ENCODE measurements at regions of chr18 and their contacts with region 1.

Region 1: DNA sequence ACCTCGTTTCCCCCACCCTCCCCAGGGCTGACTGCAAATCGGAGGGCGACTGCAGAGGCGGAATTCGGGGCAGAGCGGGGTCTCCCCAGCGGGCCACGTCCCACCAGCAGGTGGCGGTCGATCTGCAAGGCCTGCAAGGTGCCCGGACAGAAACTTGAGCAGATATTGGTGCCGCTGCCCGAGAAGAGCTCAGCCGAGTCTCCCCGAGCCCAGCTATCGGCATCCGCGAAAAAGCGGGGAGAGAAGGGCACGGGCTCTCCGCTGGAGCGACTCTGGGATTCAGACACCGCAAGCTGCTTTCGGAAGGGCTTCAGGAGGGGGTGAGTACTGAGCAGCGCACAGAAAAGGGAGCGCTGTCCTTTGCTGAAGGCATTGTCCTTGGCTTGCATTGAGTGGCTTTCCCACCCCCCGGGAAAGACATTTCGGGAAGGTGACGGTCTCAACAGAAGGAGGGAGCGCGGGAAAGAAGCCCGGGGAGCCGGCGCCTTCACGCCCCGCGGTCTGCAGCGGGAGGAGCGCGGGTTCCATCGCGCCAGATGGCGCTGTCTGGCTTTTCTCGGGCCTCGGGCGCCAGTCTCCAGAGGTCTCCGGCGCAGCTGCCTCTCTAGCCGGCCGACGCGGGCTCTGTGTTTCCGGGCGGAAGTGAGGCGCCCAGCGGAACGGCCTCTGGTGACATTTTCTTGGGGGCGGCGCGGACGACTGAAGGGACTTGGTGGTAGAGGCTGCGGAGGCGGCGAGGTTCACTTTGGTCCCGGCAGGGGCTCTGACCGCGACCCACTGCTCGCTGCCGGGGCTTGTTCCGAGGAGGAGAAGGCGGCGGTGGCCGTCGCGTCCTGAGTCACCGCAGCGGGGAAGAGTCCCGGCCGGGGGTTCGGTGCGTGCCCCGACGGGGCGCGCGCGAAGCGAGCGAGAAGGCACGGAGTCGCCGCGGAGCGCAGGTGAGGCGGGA is 69.5 kb downstream of the HAUS1 start:
- DNase-seq: peak; percentile 90
- H3K4me3 ChIP-seq: peak overlapping the region; percentile 76 to 89 (median 84)
- H3K27ac ChIP-seq: peak overlapping the region; percentile 78
- H3K4me1 ChIP-seq: peaks cover 15% of the 10 kb centered on the region
- H3K27me3 ChIP-seq: no peaks in the 10 kb centered on the region
- CTCF ChIP-seq: peak; percentile 84 to 97
- POLR2A ChIP-seq: peak; percentile 75

Region 2: GRCh38 chr18:46148810-46149209 is 24.9 kb before region 1 on chr18:
- CTCF ChIA-PET with region 1: interaction called, 38 read pairs
- POLR2A ChIA-PET with region 1: no interaction called
- dilution Hi-C with region 1: no loop called
- intact Hi-C with region 1: loop called (anchors 2 kb)
- DNase-seq: peak; percentile 66
- H3K4me3 ChIP-seq: no peak overlapping the region
- H3K27ac ChIP-seq: no peak overlapping the region
- H3K4me1 ChIP-seq: no peaks in the 10 kb centered on the region
- H3K27me3 ChIP-seq: no peaks in the 10 kb centered on the region
- CTCF ChIP-seq: peak; percentile 52 to 59
- POLR2A ChIP-seq: no peak

Region 3: DNA sequence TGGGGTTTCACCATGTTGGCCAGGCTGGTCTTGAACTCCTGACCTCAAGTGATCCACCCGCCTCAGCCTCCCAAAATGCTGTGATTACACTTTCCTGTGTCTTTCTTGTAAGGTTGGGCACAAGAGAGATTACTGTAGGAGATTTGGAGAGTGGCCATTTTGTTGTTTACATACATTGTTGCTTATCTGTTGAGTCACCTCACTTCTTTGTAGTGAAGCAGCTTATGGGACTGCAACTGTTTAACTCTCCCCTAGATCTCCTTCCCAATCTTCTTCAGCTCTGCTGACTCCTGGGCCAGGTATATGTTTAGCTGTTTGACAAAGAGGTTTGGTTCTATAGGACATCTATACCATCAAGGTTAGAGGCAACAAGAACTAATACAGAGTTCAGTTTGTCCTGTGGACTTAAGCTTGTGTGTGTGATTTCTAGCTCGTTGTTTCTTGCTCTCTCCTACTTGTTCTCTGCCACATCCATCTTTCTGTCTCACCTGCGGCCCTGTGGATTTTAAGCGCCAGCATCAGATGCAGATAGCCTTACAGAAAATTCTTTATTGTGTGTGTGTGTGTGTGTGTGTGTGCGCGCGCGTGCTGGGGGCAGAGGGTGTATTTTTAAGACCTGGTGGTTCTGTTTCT is 26.0 kb after region 1 on chr18:
- CTCF ChIA-PET with region 1: interaction called, 49 read pairs
- POLR2A ChIA-PET with region 1: interaction called, 6 read pairs
- dilution Hi-C with region 1: no loop called
- intact Hi-C with region 1: no loop called
- DNase-seq: peak; percentile 47
- H3K4me3 ChIP-seq: no peak overlapping the region
- H3K27ac ChIP-seq: peak overlapping the region; percentile 16
- H3K4me1 ChIP-seq: peaks cover 5% of the 10 kb centered on the region
- H3K27me3 ChIP-seq: no peaks in the 10 kb centered on the region
- CTCF ChIP-seq: no peak
- POLR2A ChIP-seq: no peak

Region 4: GRCh38 chr18:46220116-46220515 is 46.4 kb after region 1 on chr18:
- CTCF ChIA-PET with region 1: interaction called, 21 read pairs
- POLR2A ChIA-PET with region 1: no interaction called
- dilution Hi-C with region 1: no loop called
- intact Hi-C with region 1: no loop called
- DNase-seq: no peak
- H3K4me3 ChIP-seq: no peak overlapping the region
- H3K27ac ChIP-seq: no peak overlapping the region
- H3K4me1 ChIP-seq: peaks cover 14% of the 10 kb centered on the region
- H3K27me3 ChIP-seq: no peaks in the 10 kb centered on the region
- CTCF ChIP-seq: no peak
- POLR2A ChIP-seq: no peak

Region 5: DNA sequence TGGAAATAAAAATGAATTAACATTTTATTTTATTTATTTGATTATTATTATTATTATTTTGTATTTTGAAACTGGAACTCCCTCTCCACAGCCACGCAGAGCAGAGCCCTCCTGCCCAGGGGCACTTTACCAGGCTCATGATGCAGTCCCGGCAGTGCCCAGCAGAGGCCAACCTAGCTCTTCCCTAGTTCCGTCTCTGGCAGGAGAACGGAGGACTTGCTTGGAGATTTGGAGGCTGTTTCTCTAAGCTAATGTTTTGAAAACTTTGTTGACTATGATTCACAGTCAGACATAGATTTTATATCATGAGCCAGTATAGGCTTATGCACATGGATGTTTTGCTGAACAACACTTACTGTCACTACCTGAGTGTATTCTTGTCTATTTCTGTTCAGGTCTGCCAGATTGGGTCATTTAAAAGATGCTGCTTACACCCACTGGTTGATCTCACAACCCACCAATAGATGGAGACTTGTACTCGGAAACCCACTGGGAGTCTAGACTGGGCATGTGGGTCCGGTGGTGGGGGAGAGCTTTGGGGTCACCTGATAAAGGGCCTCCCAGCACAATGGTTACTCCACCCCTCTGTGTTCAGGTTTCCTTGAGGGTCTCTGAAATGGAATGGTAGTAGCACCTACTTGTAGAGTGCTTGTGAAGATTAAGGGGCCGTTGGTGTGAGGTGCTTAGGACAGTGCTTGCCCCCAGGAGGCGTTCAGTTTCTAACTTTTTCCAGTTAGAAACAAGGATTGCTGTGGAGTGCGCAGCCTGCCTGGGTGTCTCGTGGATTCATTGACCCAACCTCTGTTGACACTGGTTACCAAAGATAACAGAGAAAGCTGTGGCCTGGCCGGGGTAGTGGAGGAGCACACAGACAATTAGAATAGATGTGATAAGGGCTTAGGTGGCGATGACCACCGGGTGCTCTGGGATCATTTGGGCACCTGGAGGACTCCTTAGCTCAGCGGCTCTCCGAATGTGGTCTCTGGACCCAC is 107.8 kb after region 1 on chr18:
- CTCF ChIA-PET with region 1: interaction called, 36 read pairs
- POLR2A ChIA-PET with region 1: no interaction called
- dilution Hi-C with region 1: no loop called
- intact Hi-C with region 1: loop called (anchors 1 kb)
- DNase-seq: peak; percentile 61
- H3K4me3 ChIP-seq: no peak overlapping the region
- H3K27ac ChIP-seq: no peak overlapping the region
- H3K4me1 ChIP-seq: peaks cover 3% of the 10 kb centered on the region
- H3K27me3 ChIP-seq: no peaks in the 10 kb centered on the region
- CTCF ChIP-seq: peak; percentile 80 to 85
- POLR2A ChIP-seq: no peak

Region 6: GRCh38 chr18:46374863-46375262 is 201.2 kb after region 1 on chr18:
- CTCF ChIA-PET with region 1: no interaction called
- POLR2A ChIA-PET with region 1: no interaction called
- dilution Hi-C with region 1: no loop called
- intact Hi-C with region 1: no loop called
- DNase-seq: no peak
- H3K4me3 ChIP-seq: no peak overlapping the region
- H3K27ac ChIP-seq: no peak overlapping the region
- H3K4me1 ChIP-seq: no peaks in the 10 kb centered on the region
- H3K27me3 ChIP-seq: no peaks in the 10 kb centered on the region
- CTCF ChIP-seq: no peak
- POLR2A ChIP-seq: no peak

Region 7: DNA sequence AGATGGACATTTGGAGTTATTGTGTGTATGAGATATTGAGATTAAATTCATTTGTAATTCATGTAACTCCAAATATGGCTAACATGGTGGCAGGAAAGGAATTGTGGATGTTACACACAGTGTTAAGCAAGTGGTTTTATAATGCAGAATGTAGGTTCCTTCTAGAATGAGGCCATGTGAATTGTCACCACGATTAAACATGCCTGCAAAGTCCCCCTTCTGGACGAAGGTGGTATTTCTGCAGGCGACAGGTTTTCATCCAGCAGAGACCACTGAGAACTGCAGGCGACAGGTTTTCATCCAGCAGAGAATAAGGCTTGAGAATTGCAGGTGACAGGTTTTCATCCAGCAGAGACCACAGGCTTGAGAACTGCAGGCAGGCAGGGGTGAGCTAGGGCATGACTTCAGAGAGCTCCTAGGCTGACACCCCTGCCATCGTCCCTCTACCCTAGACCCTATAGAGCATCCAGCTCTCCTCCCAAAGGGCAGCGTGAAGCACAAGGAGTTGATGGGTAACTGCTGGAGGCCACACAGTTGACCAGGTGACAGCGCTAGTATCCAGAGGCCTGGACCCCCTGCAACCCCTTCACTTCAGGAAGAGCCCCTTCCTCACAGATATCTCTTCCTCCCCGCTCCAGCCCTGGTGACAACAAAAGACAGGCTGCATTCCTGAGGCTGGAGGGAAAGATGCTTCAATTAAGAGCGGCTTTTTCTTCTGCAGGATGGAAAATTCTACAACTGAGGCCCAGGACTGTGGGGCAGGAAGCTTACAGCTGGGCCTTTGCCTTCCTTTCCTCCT is 307.6 kb after region 1 on chr18:
- CTCF ChIA-PET with region 1: interaction called, 16 read pairs
- POLR2A ChIA-PET with region 1: no interaction called
- dilution Hi-C with region 1: no loop called
- intact Hi-C with region 1: loop called (anchors 1 kb)
- DNase-seq: peak; percentile 37
- H3K4me3 ChIP-seq: no peak overlapping the region
- H3K27ac ChIP-seq: no peak overlapping the region
- H3K4me1 ChIP-seq: no peaks in the 10 kb centered on the region
- H3K27me3 ChIP-seq: no peaks in the 10 kb centered on the region
- CTCF ChIP-seq: peak; percentile 57 to 61
- POLR2A ChIP-seq: no peak

Region 8: GRCh38 chr18:46728219-46728930 is 554.7 kb after region 1 on chr18:
- CTCF ChIA-PET with region 1: no interaction called
- POLR2A ChIA-PET with region 1: no interaction called
- dilution Hi-C with region 1: no loop called
- intact Hi-C with region 1: no loop called
- DNase-seq: no peak
- H3K4me3 ChIP-seq: no peak overlapping the region
- H3K27ac ChIP-seq: no peak overlapping the region
- H3K4me1 ChIP-seq: no peaks in the 10 kb centered on the region
- H3K27me3 ChIP-seq: no peaks in the 10 kb centered on the region
- CTCF ChIP-seq: no peak
- POLR2A ChIP-seq: no peak